ENCODE measurements at regions of chr1 and their contacts with region 1.

Region 1: DNA sequence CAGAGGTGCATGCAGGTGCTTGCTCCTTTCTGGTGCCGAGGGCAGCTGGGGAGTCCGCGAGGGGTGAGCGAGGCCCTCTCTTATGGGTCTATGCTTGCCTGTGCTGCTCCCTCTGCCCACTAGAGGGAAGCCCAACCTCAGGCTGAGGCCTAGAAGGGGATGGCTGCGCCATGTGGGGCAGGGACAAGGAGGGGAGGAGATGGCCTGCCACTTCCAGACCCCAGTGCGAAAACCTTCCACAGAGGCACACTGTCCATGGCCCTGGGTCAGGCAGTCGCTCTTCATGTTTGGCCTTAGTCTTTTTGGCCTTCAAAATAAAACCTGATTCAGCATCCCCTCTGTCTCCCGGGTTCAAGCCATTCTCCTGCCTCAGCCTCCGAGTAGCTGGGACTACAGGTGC is 14.0 kb downstream of the RHBG start:
- DNase-seq: peak; percentile 79
- ATAC-seq: peak; percentile 92
- H3K4me3 Mint-ChIP-seq: no peak overlapping the region
- H3K27ac Mint-ChIP-seq: no peak overlapping the region
- H3K4me1 Mint-ChIP-seq: peaks cover 4% of the 10 kb centered on the region
- H3K27me3 Mint-ChIP-seq: peaks cover 14% of the 10 kb centered on the region
- CTCF ChIP-seq: peak; percentile 82

Region 2: DNA sequence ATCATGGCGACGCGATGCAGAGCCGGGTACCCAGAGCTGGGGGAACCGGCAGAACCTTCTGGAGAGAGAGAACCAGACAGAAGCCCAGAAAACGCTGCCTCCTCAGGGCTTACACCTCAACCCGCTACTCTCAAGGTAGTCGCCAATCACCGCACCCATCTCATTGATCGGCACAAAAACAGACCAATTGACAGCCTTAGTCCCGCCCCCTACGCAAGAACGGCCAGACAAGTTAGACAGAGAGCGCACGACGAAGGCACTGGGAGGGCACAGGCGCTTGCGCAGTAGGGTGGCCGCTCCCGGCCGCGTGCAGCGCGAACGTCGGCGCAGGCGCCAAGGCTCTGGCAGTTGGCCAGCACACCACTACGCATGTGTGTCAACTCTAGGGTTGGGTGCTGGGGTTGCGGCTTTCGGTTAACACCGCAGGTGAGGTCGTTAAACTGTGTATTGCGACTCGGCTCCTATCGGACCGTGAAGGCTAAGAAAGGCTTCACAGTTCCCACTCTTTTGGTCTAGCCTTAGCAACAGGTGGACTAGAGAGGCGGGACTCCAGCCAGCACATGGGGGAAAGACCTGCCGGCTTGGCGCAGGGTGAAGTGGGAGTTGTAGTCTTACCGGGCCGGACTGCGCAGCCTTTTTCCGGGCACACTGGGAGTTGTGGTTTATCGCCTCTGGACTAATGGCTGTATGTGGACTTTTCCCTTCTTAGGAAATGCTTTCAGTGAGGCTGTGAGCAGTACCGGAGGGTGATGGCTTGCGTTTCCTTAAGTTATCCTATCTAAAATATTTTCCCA is 44.6 kb before region 1 on chr1 and contains the starts of genes CCT3 and TSACC:
- CTCF ChIA-PET with region 1: interaction called, 13 read pairs
- POLR2A ChIA-PET with region 1: no interaction called
- intact Hi-C with region 1: no loop called
- DNase-seq: peak; percentile 99
- ATAC-seq: peak; percentile 95
- H3K4me3 Mint-ChIP-seq: peak within 1 kb of the TSS; percentile 98
- H3K27ac Mint-ChIP-seq: peak within 1 kb of the TSS; percentile 99
- H3K4me1 Mint-ChIP-seq: peaks cover 27% of the 10 kb centered on the region
- H3K27me3 Mint-ChIP-seq: no peaks in the 10 kb centered on the region
- CTCF ChIP-seq: no peak
- total RNA-seq, gene CCT3: 379 to 388 TPM
- total RNA-seq, gene TSACC: 0.72 TPM in 1 of 2 experiments, not detected in the other

Region 3: DNA sequence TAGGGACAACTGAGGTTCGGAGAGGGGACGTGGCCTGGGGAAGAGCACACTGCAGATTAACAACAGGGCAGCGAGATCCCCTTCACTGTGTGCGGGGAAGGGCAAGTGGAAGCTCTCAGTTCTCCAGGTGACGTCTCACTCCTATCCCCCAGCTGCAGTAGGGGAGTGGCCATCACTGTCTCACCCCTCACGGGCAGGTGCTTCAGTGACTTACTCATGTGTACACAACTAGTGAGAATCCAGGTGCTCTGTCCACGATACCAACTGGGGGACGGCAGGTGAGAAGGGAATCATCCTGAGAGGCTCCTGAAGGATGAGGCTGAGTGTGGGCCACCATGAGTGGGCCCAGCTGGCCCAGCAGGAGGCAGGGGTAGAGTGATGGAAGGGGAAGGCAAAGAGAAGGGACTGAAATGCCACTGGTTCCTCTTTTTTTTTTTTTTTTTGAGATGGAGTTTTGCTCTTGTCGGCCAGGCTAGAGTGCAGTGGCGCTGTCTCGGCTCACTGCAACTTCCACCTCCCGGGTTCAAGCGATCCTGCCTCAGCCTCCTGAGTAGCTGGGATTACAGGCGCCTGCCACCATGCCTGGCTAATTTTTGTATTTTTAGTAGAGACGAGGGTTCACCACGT is 11.9 kb after region 1 on chr1:
- CTCF ChIA-PET with region 1: interaction called, 41 read pairs
- POLR2A ChIA-PET with region 1: interaction called, 3 read pairs
- intact Hi-C with region 1: no loop called
- DNase-seq: no peak
- ATAC-seq: no peak
- H3K4me3 Mint-ChIP-seq: no peak overlapping the region
- H3K27ac Mint-ChIP-seq: no peak overlapping the region
- H3K4me1 Mint-ChIP-seq: no peaks in the 10 kb centered on the region
- H3K27me3 Mint-ChIP-seq: peaks cover 13% of the 10 kb centered on the region
- CTCF ChIP-seq: no peak

Region 4: DNA sequence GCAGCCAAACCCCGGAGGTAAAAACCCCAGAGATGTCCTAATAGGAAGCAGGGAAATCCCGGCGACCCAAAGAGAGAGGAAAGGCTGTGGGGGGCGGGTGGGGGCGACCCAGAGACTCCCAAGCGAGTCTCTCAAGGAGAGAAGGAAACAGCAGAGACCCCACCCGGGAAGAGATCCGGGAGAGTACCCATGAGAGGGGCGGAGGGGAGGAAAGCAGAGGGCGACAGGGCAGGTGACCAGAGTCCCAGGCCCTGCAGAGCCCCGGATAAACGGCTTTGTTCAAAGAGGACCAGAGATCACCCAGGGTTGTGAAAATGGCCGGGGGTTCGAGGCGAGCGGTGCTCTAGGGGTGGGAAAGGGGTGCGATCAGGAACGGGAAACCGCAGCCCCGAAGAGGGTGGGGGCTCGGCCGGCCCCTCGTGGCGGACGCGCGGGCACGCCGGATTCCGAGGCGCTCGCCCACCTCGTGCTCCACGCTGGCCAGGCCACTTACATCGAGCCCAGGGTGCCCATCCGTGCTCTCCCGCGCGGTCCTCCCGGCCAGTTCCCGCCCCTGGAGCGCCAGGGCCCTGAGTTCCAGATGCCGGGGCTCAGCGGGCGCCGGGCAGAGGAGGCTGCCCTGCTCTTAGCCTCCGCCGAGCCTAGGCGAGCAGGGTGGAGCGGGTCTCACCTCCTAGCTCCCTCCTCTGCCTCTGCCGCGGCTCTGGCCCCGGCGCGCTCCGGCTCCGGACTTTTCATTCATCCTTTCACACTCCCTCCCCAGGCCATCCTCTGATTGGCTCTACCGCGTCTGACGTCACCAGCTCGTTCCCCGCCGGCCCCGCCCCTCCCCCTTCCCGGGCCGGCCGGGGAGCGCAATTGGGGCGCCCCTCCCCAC is 38.3 kb after region 1 on chr1:
- CTCF ChIA-PET with region 1: interaction called, 177 read pairs
- POLR2A ChIA-PET with region 1: interaction called, 7 read pairs
- intact Hi-C with region 1: no loop called
- DNase-seq: peak; percentile 85
- ATAC-seq: peak; percentile 88
- H3K4me3 Mint-ChIP-seq: peak overlapping the region; percentile 72
- H3K27ac Mint-ChIP-seq: no peak overlapping the region
- H3K4me1 Mint-ChIP-seq: peaks cover 18% of the 10 kb centered on the region
- H3K27me3 Mint-ChIP-seq: peaks cover 71% of the 10 kb centered on the region
- CTCF ChIP-seq: no peak

Region 5: GRCh38 chr1:156480411-156481192 is 97.6 kb after region 1 on chr1:
- CTCF ChIA-PET with region 1: interaction called, 10 read pairs
- POLR2A ChIA-PET with region 1: no interaction called
- intact Hi-C with region 1: no loop called
- DNase-seq: peak; percentile 83
- ATAC-seq: peak; percentile 91
- H3K4me3 Mint-ChIP-seq: peak overlapping the region; percentile 20
- H3K27ac Mint-ChIP-seq: peak overlapping the region; percentile 79
- H3K4me1 Mint-ChIP-seq: peaks cover 58% of the 10 kb centered on the region
- H3K27me3 Mint-ChIP-seq: no peaks in the 10 kb centered on the region
- CTCF ChIP-seq: peak; percentile 73

Region 6: GRCh38 chr1:156625436-156626078 is 242.5 kb after region 1 on chr1:
- CTCF ChIA-PET with region 1: interaction called, 15 read pairs
- POLR2A ChIA-PET with region 1: interaction called, 3 read pairs
- intact Hi-C with region 1: no loop called
- DNase-seq: peak; percentile 74
- ATAC-seq: peak; percentile 74
- H3K4me3 Mint-ChIP-seq: peak overlapping the region; percentile 53
- H3K27ac Mint-ChIP-seq: no peak overlapping the region
- H3K4me1 Mint-ChIP-seq: peaks cover 10% of the 10 kb centered on the region
- H3K27me3 Mint-ChIP-seq: peaks cover 37% of the 10 kb centered on the region
- CTCF ChIP-seq: peak; percentile 96